Caco-2 (cell line): ENCODE measurements at regions of chr20 and their contacts with region 1.

Region 1: GRCh38 chr20:35269055-35269781 is 8.7 kb downstream of the MMP24OS start:
- DNase-seq: peak; percentile 88 to 93
- H3K4me3 ChIP-seq: no peak overlapping the region
- H3K4me3 Mint-ChIP-seq: no peak overlapping the region
- H3K27ac Mint-ChIP-seq: peak overlapping the region; percentile 38
- H3K4me1 ChIP-seq: peaks cover 19% of the 10 kb centered on the region
- H3K4me1 Mint-ChIP-seq: peaks cover 21% of the 10 kb centered on the region
- H3K27me3 ChIP-seq: no peaks in the 10 kb centered on the region
- H3K27me3 Mint-ChIP-seq: no peaks in the 10 kb centered on the region
- CTCF ChIP-seq: peak; percentile 97 to 99

Region 2: DNA sequence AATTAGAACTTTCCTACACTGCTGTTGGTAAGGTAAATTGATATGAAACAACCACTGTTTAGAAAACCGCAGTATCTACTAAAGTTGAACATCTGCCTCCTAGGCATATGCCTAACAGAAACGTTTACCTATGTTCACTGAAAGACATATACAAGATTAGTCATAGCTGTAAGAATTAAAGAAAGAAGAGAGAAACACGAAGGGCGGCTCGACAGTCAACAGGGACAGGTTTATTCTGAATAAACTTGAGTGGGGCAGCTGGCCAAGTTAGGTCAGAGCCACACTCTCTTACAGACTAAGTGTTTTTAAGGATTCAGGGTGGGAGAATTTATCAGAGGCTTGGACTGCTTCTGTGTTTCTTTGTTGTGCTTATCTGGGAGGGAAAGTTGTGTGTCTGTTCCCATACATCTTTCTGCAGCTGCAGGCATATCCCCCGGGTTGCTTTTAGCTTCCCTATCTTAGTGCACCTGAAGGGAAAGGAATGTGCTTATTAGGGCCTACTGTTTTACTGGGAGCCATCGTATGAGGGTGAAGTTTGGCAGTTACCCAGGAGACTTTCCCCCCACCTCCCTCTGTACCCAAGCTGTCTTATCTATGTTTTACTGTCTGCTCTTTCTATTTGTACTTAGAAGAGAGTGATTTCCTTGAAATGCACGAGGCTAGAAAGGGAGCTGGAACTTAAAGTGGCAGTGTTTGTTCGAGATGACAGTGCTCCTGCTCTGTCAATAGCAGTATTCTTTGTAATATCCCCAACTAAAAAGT is 76.9 kb before region 1 on chr20:
- CTCF ChIA-PET with region 1: interaction called, 3 read pairs
- POLR2A ChIA-PET with region 1: interaction called, 12 read pairs
- intact Hi-C with region 1: no loop called
- DNase-seq: peak; percentile 48 to 59
- H3K4me3 ChIP-seq: no peak overlapping the region
- H3K4me3 Mint-ChIP-seq: no peak overlapping the region
- H3K27ac Mint-ChIP-seq: peak overlapping the region; percentile 29
- H3K4me1 ChIP-seq: peaks cover 55% of the 10 kb centered on the region
- H3K4me1 Mint-ChIP-seq: peaks cover 46% of the 10 kb centered on the region
- H3K27me3 ChIP-seq: no peaks in the 10 kb centered on the region
- H3K27me3 Mint-ChIP-seq: no peaks in the 10 kb centered on the region
- CTCF ChIP-seq: no peak

Region 3: GRCh38 chr20:35215066-35215956 is 53.9 kb before region 1 on chr20:
- CTCF ChIA-PET with region 1: interaction called, 7 read pairs
- POLR2A ChIA-PET with region 1: interaction called, 4 read pairs
- intact Hi-C with region 1: loop called (anchors 1 kb)
- DNase-seq: peak; percentile 71 to 73
- H3K4me3 ChIP-seq: no peak overlapping the region
- H3K4me3 Mint-ChIP-seq: no peak overlapping the region
- H3K27ac Mint-ChIP-seq: peak overlapping the region; percentile 83
- H3K4me1 ChIP-seq: peaks cover 33% of the 10 kb centered on the region
- H3K4me1 Mint-ChIP-seq: peaks cover 27% of the 10 kb centered on the region
- H3K27me3 ChIP-seq: no peaks in the 10 kb centered on the region
- H3K27me3 Mint-ChIP-seq: no peaks in the 10 kb centered on the region
- CTCF ChIP-seq: no peak

Region 4: DNA sequence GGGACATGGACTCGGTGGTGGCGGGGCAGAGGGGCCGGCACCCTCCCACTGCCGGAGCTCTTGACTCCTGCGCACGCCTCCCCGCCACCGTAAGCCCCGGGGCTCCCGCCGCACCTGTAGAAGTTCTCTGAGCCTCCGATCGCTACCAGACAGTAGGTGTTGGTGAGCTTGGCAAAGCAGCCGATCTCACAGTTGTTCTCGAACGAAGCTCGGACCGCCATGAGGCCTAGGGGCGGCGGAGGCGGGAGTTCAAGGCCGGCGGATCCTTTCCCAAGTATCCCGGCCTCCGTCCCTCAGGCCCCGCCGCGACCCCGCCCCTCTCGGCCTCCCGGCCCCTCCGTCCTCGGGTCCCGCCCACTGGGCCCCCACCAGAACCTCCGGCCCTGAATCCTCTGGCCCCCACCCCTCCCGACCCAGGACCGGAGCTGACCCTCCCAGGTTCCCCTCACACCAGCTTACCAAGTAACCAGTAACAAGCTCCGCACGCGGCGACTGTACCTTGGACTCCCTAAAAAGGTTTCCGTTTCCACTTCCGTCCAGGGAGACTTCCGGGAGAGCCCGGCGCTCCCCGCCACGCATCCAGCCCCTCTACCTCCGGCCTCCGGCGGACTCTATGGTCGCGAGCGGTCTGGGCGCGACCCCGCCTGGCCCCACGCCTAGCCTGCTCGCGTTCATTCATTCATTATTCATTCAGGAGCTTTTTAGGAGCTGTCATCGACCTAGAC is 15.2 kb after region 1 on chr20 and contains the start of gene EIF6:
- CTCF ChIA-PET with region 1: interaction called, 5 read pairs
- POLR2A ChIA-PET with region 1: interaction called, 46 read pairs
- intact Hi-C with region 1: no loop called
- DNase-seq: peak; percentile 97 to 98
- H3K4me3 ChIP-seq: peak within 1 kb of the TSS; percentile 95
- H3K4me3 Mint-ChIP-seq: peak within 1 kb of the TSS; percentile 84
- H3K27ac Mint-ChIP-seq: peak within 1 kb of the TSS; percentile 87
- H3K4me1 ChIP-seq: peaks cover 28% of the 10 kb centered on the region
- H3K4me1 Mint-ChIP-seq: peaks cover 18% of the 10 kb centered on the region
- H3K27me3 ChIP-seq: no peaks in the 10 kb centered on the region
- H3K27me3 Mint-ChIP-seq: no peaks in the 10 kb centered on the region
- CTCF ChIP-seq: no peak
- total RNA-seq, gene EIF6: 403 and 420 TPM in 2 replicates